K562 (cell line): ENCODE measurements at regions of chr4 and their contacts with region 1.

Region 1: DNA sequence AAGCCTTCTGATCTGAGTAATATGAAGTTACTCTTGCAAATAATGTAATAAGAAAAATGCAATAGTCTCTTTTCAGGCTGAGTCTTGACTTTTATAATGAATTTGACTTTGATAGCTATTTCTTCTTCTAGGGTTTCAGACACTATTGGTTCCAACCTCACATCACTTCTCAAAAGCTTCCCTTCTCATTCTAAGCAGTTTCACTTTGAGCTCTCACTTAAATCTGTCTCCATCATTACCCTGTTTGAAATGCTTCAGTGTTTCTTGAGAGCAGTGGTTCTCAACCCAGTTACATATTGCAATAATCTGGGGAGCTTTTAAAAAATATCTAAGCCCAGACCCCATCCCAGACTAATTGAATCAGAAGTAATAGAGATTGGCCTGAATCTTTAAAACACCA is 40.5 kb upstream of the BMP2K start:
- DNase-seq: no peak
- ATAC-seq: no peak
- H3K4me3 ChIP-seq: no peak overlapping the region
- H3K27ac ChIP-seq: no peak overlapping the region
- H3K4me1 ChIP-seq: peaks cover 22 to 67% of the 10 kb centered on the region in 2 experiments
- H3K27me3 ChIP-seq: no peaks in the 10 kb centered on the region
- CTCF ChIP-seq: no peak
- EP300 ChIP-seq: no peak
- POLR2A ChIP-seq: no peak
- RAD21 ChIP-seq: no peak

Region 2: DNA sequence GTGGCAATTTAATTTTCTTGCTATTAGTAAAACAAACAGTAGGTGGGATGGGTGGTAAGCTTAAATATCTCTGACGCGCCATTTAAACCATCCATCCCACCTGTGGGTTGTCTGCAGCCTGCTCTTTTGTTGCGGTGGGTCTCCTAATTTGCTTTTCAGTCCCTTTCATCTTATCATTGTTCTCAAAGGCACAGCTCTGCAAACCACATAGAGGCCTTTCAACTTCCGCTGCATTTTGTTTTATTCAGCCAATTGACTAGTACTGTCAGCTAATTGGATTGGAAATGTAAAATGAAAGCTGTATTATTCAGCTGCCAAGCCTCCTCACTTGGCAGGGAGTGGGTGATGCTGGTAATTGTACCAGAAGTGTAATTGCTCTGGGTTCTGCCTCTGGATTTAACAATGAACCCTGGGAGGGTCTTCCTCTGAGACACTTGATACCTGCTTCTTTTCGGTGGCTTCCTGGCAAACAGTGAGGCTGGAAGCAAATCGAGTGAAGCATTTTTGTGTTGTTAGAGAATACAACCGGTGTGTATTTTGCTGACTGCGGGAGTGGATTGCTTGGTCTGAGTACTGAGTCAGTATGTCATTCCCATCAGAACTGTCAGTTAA is 513.0 kb before region 1 on chr4:
- CTCF ChIA-PET with region 1: no interaction called
- POLR2A ChIA-PET with region 1: no interaction called
- in situ Hi-C with region 1: no loop called
- intact Hi-C with region 1: no loop called
- DNase-seq: no peak
- ATAC-seq: no peak
- H3K4me3 ChIP-seq: no peak overlapping the region
- H3K27ac ChIP-seq: no peak overlapping the region
- H3K4me1 ChIP-seq: no peaks in the 10 kb centered on the region
- H3K27me3 ChIP-seq: peaks cover 3 to 4% of the 10 kb centered on the region in 2 experiments; a peak in 3 of 5 replicates
- CTCF ChIP-seq: no peak
- EP300 ChIP-seq: no peak
- POLR2A ChIP-seq: no peak
- RAD21 ChIP-seq: no peak

Region 3: GRCh38 chr4:78720994-78721677 is 14.6 kb before region 1 on chr4:
- CTCF ChIA-PET with region 1: no interaction called
- POLR2A ChIA-PET with region 1: interaction called, 12 read pairs
- in situ Hi-C with region 1: no loop called
- intact Hi-C with region 1: no loop called
- DNase-seq: peak; percentile 30 to 93 (median 57)
- ATAC-seq: peak; percentile 96
- H3K4me3 ChIP-seq: peak overlapping the region; percentile 18; the same call in 1 of the 2 replicates
- H3K27ac ChIP-seq: peak overlapping the region; percentile 93
- H3K4me1 ChIP-seq: peaks cover 16 to 45% of the 10 kb centered on the region in 2 experiments
- H3K27me3 ChIP-seq: no peaks in the 10 kb centered on the region
- CTCF ChIP-seq: no peak
- EP300 ChIP-seq: peak; percentile 97
- POLR2A ChIP-seq: peak; percentile 72
- RAD21 ChIP-seq: peak in 1 of 2 experiments; percentile 35; a peak in 2 of 4 replicates